K562 (cell line): ENCODE measurements at regions of chr13 and their contacts with region 1.

Region 1: DNA sequence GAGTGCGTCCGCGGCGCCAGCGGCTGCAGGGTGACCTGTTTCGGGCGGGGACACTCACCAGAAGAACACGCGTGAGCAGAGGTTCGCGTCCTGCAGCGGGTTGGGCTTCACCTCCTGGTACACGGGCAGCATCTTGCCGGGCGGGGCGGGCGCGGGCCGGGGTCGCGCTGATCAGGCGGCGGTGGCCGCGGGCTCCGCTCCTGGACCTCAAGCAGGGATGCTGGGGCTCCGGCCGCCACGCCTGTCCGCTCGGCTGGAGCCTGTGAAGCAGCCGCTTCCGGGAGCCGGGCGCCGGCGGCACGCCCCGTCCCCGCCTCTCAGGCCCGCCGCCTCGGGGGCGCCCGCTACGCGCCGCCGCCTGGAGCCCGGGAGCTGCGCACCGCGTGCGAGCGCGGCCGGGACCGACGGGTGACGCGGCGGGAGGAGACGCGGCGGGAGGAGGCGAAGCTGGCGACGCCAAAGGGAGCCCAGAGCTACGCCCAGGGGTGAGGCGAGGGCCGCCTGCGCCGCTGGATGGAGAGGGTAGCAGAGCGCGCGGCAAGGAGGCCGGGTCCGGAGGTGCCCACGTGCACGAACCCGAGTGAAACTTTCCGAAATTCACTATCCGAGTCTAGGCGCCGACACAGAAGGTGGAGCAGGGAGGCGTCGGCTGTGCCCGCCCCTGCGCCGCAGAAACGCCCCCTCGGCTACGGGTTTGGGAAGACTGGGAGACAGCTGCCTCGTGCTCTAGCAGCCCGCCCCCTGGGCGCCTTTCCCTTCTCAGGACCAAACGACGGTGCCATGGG is at the start of gene ABCC4:
- DNase-seq: peak; percentile 77 to 81 (median 80)
- ATAC-seq: peak; percentile 90
- H3K4me3 ChIP-seq: peak within 1 kb of the TSS; percentile 86
- H3K27ac ChIP-seq: peak within 1 kb of the TSS; percentile 88
- H3K4me1 ChIP-seq: peaks cover 22 to 30% of the 10 kb centered on the region in 2 experiments; a peak in 4 of 5 replicates
- H3K27me3 ChIP-seq: no peaks in the 10 kb centered on the region
- CTCF ChIP-seq: 0 out of 6 replicates have a peak, but pooled peaks of 1 of the 3 experiments have one; percentile 6
- EP300 ChIP-seq: no peak
- POLR2A ChIP-seq: peak; percentile 58; the same call in 1 of the 2 replicates
- RAD21 ChIP-seq: peak in 1 of 2 experiments; percentile 18; a peak in 2 of 4 replicates
- polyA plus RNA-seq, gene ABCC4: 9.4 to 10.5 TPM

Region 2: DNA sequence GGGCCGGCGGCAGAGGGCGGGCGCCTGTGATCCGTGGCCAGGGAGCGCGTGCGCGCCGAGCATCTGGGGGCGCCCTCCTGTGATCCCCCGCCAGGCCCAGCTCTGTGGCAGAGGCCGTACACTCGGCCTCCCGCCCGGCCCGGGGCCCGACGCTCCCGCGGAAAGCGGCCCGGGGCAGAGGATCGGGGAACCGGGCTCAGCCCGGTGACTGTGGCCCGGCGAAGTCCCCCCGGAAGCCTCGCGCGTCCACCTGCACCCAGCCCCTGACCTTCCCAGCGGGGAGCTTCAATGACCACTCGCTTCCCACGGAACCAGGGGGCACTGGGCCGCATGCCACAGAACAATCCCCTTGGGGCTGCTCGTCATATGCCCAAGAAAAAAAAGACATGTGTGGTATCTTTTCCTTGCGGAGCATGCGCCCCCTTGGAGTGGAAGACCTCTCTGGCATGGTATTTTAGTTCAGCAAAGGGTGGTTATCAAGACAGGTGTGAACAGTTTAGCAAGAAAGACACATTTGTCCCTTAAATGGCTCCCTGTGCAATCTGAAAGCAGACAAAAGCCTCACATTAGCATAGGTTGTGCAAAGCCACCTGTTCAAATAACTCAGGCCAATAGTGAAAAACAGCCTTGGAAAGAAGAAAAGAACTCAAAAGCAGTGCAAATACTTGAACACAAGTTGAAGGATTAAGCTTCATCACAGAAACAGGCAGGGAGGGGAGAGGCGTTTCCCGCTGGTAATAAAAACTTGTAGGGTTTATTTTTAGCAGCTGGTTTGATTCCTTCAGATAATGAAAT is 298.2 kb before region 1 on chr13:
- CTCF ChIA-PET with region 1: no interaction called
- POLR2A ChIA-PET with region 1: no interaction called
- in situ Hi-C with region 1: no loop called
- intact Hi-C with region 1: no loop called
- DNase-seq: no peak
- ATAC-seq: no peak
- H3K4me3 ChIP-seq: no peak overlapping the region
- H3K27ac ChIP-seq: no peak overlapping the region
- H3K4me1 ChIP-seq: no peaks in the 10 kb centered on the region
- H3K27me3 ChIP-seq: peaks cover 0 to 10% of the 10 kb centered on the region in 2 experiments; a peak in 3 of 5 replicates
- CTCF ChIP-seq: no peak
- EP300 ChIP-seq: no peak
- POLR2A ChIP-seq: no peak
- RAD21 ChIP-seq: no peak

Region 3: GRCh38 chr13:95289020-95289444 is 12.3 kb before region 1 on chr13:
- CTCF ChIA-PET with region 1: no interaction called
- POLR2A ChIA-PET with region 1: interaction called, 15 read pairs
- in situ Hi-C with region 1: no loop called
- intact Hi-C with region 1: no loop called
- DNase-seq: no peak
- ATAC-seq: no peak
- H3K4me3 ChIP-seq: no peak overlapping the region
- H3K27ac ChIP-seq: no peak overlapping the region
- H3K4me1 ChIP-seq: peaks cover 21% of the 10 kb centered on the region in 2 experiments; a peak in 4 of 5 replicates
- H3K27me3 ChIP-seq: no peaks in the 10 kb centered on the region
- CTCF ChIP-seq: no peak
- EP300 ChIP-seq: no peak
- POLR2A ChIP-seq: no peak
- RAD21 ChIP-seq: no peak

Region 4: GRCh38 chr13:95378603-95379002 is 77.2 kb after region 1 on chr13:
- CTCF ChIA-PET with region 1: no interaction called
- POLR2A ChIA-PET with region 1: interaction called, 6 read pairs
- in situ Hi-C with region 1: no loop called
- intact Hi-C with region 1: loop called (anchors 1 kb)
- DNase-seq: no peak
- ATAC-seq: no peak; the same call in 2 of the 3 replicates
- H3K4me3 ChIP-seq: no peak overlapping the region
- H3K27ac ChIP-seq: no peak overlapping the region
- H3K4me1 ChIP-seq: peaks cover 0 to 6% of the 10 kb centered on the region in 2 experiments; a peak in 3 of 5 replicates
- H3K27me3 ChIP-seq: no peaks in the 10 kb centered on the region
- CTCF ChIP-seq: no peak
- EP300 ChIP-seq: no peak
- POLR2A ChIP-seq: no peak
- RAD21 ChIP-seq: no peak